CD14-positive monocyte (primary cell): ENCODE measurements at regions of chr11 and their contacts with region 1.

Region 1: DNA sequence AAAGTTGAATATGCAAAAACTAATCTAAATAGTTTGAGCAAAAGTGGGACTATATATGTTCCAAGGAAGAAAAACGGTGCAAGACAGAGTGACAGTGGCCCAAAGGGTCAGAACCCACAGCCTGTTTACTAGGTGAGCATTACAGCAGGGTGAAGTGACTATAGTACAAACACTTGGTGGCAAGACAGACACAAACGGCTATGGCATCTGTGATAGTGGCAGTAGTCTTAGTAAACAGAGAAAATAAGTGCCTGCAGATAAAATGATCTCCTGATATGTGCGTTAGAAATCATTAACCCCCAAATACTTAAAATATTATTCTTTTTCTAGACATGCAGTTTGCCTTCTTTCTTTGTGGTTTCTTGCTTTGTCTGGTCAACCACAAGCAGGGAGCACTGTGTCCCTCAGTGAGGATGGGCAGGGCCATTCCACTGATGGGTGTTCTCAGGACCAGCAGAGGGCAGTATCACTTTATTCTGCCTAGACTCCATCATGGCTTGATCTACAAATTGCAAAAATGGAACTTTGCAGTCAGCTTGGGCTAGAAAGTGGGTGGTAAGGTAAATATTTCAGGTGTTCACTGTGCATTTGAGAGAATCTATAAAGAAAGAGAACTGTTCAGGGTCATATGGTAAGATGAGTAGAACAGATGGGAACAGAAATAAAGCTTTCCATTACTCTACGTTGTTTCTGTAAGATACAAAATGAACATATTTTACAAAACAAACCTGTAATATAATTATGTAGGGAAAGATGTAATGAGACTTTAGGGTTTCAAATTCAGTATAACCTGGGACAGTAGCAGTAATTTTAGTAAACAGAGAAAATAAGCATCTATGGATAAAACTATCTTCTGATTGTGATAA is 198.2 kb downstream of the SWAP70 start:
- DNase-seq: peak; percentile 30 to 55 (median 49)
- H3K4me3 ChIP-seq: no peak overlapping the region
- H3K4me3 Mint-ChIP-seq: no peak overlapping the region
- H3K27ac ChIP-seq: no peak overlapping the region
- H3K27ac Mint-ChIP-seq: no peak overlapping the region
- H3K4me1 ChIP-seq: no peaks in the 10 kb centered on the region
- H3K4me1 Mint-ChIP-seq: peaks cover 8% of the 10 kb centered on the region
- H3K27me3 ChIP-seq: no peaks in the 10 kb centered on the region
- H3K27me3 Mint-ChIP-seq: no peaks in the 10 kb centered on the region
- CTCF ChIP-seq: peak; percentile 78

Region 2: DNA sequence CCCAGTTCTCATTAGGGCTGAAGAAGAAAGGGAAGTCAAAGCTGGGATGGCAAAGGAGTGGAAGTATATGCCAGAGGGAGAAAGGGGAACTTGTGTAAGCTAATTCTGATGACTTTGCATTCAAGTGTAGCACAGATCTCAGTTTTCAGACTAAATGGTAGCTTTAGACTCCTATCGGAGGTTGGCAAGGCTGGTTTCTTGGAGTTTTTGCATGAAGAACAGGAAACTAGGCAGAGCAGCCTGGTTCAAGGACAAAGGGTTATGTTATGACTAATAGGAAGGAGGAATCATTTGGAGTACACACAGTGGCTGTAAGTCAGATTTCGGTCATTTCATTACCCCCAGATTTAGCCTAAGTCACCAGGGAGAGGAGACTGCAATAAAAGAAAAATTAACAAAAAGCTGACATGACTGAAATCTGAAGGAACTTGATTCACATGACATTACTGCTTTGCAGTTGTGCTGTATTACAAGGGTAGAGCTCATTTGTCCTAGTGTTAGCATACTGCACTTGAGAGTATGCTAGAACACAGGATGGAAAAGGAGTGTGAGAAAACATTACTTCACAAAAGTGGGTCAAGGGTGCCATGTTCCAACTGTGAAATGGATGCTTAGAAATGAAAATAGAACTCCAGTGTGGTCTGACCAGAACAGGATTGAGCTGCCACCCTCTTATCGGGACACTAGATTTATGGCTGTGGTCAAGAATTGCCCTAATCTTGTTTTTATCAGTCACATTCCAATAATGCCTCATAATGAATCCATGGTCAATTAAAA is 466.4 kb after region 1 on chr11:
- intact Hi-C with region 1: loop called (anchors 5 kb)
- DNase-seq: peak; percentile 50 to 75 (median 72)
- H3K4me3 ChIP-seq: no peak overlapping the region
- H3K4me3 Mint-ChIP-seq: peak overlapping the region in 1 of 2 donors; percentile 66
- H3K27ac ChIP-seq: peak overlapping the region in 1 of 2 donors; percentile 56
- H3K27ac Mint-ChIP-seq: peak overlapping the region; percentile 44 to 90 (median 79)
- H3K4me1 ChIP-seq: peaks cover 31 to 32% of the 10 kb centered on the region in 2 donors
- H3K4me1 Mint-ChIP-seq: peaks cover 38% of the 10 kb centered on the region
- H3K27me3 ChIP-seq: no peaks in the 10 kb centered on the region
- H3K27me3 Mint-ChIP-seq: peaks cover 3 to 4% (median 3%) of the 10 kb centered on the region in 3 donors
- CTCF ChIP-seq: no peak